Caco-2 (cell line): ENCODE measurements at regions of chr6 and their contacts with region 1.

Region 1: DNA sequence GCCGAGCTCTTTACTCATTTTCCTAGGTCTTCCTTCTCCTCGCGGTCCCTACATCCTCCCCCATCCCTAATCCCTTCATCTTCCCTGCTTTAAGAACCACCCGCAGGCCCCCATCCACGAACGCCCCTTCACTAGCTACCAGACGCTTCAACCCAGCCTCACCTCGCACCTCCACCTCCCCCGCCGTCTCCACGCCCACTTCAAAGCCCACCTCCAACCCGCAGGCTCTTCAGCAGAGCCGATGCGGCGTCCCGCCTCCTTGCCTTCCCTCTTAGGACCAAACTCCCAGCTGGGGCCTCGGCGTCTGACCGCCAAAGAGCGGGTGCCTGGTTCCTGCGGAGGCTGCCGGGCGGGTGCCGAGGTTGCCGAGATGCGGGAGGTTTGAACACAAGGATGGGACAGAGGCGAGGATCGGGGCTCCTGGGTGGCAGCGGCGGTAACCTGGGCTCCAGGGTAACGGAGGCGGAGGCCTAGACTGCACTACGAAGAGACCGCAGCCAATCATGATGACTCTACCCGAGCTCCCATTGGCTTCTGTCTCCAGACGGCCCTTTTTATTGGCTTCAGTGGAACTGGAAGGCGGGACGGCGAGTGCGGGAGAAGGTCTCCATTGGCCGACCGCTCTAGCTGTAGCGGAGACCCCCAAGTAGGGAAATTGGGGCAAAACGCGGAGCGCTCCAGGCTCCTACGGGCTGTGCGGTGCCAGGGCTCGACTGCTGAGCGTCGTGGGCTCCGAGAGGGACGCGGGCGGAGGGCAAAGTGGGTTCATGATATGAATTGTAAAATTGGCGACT is at the start of gene LCA5:
- DNase-seq: peak; percentile 94 to 97
- H3K4me3 ChIP-seq: peak within 1 kb of the TSS; percentile 75
- H3K4me3 Mint-ChIP-seq: no peak within 1 kb of the TSS
- H3K27ac Mint-ChIP-seq: no peak within 1 kb of the TSS
- H3K4me1 ChIP-seq: peaks cover 36% of the 10 kb centered on the region
- H3K4me1 Mint-ChIP-seq: peaks cover 17% of the 10 kb centered on the region
- H3K27me3 ChIP-seq: no peaks in the 10 kb centered on the region
- H3K27me3 Mint-ChIP-seq: no peaks in the 10 kb centered on the region
- CTCF ChIP-seq: no peak
- total RNA-seq, gene LCA5: 10.9 and 12.2 TPM in 2 replicates

Region 2: DNA sequence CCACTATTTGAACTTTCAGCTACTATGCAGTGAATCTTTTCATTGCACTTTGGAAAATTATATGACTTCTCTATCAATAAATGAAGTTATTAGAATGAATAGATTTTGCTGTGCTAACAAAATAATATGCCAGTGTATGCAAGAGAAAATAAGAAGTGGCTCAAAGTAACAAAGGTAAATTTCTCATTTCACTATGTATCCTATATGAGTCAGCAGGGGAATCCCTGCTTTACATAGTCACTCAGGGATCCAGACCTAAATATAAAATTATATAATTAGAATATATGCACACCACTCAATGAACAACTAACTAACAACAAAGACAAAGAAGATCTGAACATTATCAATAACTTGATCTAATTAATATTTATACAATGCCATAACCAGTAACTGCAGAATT is 1060.6 kb before region 1 on chr6:
- CTCF ChIA-PET with region 1: no interaction called
- POLR2A ChIA-PET with region 1: no interaction called
- intact Hi-C with region 1: no loop called
- DNase-seq: no peak
- H3K4me3 ChIP-seq: no peak overlapping the region
- H3K4me3 Mint-ChIP-seq: no peak overlapping the region
- H3K27ac Mint-ChIP-seq: no peak overlapping the region
- H3K4me1 ChIP-seq: no peaks in the 10 kb centered on the region
- H3K4me1 Mint-ChIP-seq: peaks cover 6% of the 10 kb centered on the region
- H3K27me3 ChIP-seq: no peaks in the 10 kb centered on the region
- H3K27me3 Mint-ChIP-seq: no peaks in the 10 kb centered on the region
- CTCF ChIP-seq: no peak

Region 3: DNA sequence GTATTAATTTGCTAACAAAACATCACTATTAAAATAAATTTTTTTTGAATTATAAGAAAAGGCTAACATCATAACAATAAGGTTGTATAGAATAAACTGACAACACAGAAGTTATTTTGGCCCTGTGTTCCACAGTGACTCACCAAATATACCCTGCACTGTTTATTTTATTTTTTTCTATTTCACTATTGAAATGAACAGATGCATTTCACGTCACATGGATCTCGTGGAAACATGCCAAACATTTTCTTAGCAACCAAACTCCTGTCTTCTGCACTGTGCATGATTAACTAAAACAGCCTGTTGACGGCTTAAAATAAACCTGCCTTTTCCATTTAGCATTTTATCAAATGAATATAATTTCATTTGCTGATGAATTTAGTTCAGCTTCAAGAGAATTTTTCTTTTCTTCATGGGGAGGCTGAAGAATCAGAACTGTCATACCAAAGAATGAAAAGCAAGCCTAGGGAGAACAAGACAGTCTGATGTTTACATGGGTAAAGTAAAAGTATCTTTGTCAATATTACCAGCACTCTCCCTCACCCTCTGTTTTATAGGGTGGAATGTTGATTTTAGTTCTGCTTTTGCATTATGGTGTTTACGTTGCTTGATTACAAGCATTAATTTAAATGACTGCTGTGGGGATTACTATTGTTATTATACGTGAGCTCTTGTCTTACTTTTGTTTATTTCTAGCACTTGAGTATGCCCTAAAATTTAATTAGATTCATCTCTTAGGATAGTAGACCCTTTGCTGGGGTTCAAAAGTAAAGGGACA is 115.3 kb before region 1 on chr6:
- CTCF ChIA-PET with region 1: no interaction called
- POLR2A ChIA-PET with region 1: no interaction called
- intact Hi-C with region 1: no loop called
- DNase-seq: no peak
- H3K4me3 ChIP-seq: no peak overlapping the region
- H3K4me3 Mint-ChIP-seq: no peak overlapping the region
- H3K27ac Mint-ChIP-seq: no peak overlapping the region
- H3K4me1 ChIP-seq: no peaks in the 10 kb centered on the region
- H3K4me1 Mint-ChIP-seq: no peaks in the 10 kb centered on the region
- H3K27me3 ChIP-seq: no peaks in the 10 kb centered on the region
- H3K27me3 Mint-ChIP-seq: no peaks in the 10 kb centered on the region
- CTCF ChIP-seq: no peak

Region 4: DNA sequence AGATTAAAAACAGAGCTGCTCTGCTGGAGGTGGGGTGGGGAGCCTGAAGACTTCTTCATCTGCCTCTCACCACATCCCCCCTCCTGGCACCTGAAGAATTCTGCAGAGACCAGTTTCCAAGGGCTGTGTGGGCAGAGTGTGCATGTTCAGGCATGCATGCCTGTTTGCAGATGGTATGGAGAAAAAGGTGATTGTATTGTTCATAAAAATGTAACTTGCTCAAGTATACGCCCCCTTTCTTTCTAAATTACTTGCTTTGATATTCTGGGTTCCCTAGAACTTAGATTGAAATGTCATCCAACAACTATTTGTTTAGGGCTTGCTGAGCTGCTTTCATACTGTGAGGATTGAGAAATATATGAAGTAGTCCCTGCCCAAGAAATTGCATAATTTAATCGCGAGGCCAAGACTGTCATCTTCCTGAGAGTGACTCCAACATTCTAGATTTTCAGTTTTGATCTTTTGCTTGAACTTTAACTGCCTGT is 83.6 kb before region 1 on chr6:
- CTCF ChIA-PET with region 1: no interaction called
- POLR2A ChIA-PET with region 1: no interaction called
- intact Hi-C with region 1: no loop called
- DNase-seq: peak; percentile 36 to 49
- H3K4me3 ChIP-seq: no peak overlapping the region
- H3K4me3 Mint-ChIP-seq: no peak overlapping the region
- H3K27ac Mint-ChIP-seq: peak overlapping the region; percentile 10
- H3K4me1 ChIP-seq: peaks cover 23% of the 10 kb centered on the region
- H3K4me1 Mint-ChIP-seq: peaks cover 18% of the 10 kb centered on the region
- H3K27me3 ChIP-seq: no peaks in the 10 kb centered on the region
- H3K27me3 Mint-ChIP-seq: no peaks in the 10 kb centered on the region
- CTCF ChIP-seq: no peak

Region 5: DNA sequence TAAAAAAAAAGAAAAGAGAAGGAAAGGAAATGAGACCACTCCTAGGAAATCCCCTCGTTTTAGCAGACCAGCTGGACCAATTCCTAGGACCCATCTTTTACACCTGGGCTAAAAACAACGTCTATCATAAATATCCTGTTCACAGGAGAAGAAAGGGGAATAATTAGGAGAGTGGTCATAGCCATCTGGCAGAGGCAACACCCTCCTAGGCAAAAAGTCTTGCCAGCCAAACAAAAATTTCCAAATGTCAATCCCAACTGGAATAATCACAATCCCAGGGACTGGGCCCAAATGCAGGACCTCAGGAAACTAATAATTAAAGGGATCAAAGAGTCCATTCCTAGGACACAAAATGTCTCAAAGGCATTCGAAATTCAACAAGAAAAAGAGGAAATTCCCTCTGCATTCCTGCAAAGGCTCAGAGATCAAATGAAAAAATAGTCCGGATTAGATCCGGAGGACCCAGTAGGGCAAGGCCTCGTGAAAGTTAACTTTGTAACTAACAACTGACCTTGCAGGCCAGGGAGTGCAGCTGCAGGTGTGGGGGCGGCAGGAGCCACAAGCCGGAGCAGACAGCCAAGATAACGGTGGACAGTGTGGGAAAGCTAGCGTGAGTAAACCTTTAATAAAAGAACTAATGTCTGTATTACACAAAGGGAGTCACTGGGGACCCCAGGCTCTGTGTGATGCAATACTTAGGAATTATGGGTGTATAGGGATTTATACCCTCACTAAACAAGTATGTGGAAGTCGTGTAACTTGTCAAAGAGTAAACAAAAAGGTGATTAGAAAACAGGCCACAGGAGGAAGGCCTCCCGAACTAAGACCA is 11.7 kb before region 1 on chr6:
- CTCF ChIA-PET with region 1: interaction called, 4 read pairs
- POLR2A ChIA-PET with region 1: interaction called, 4 read pairs
- intact Hi-C with region 1: loop called (anchors 1 kb)
- DNase-seq: peak; percentile 87 to 93
- H3K4me3 ChIP-seq: peak overlapping the region; percentile 17
- H3K4me3 Mint-ChIP-seq: peak overlapping the region; percentile 68
- H3K27ac Mint-ChIP-seq: peak overlapping the region; percentile 84
- H3K4me1 ChIP-seq: peaks cover 52% of the 10 kb centered on the region
- H3K4me1 Mint-ChIP-seq: peaks cover 32% of the 10 kb centered on the region
- H3K27me3 ChIP-seq: no peaks in the 10 kb centered on the region
- H3K27me3 Mint-ChIP-seq: no peaks in the 10 kb centered on the region
- CTCF ChIP-seq: no peak

Region 6: GRCh38 chr6:79586548-79586947 is 49.4 kb after region 1 on chr6:
- CTCF ChIA-PET with region 1: no interaction called
- POLR2A ChIA-PET with region 1: no interaction called
- intact Hi-C with region 1: no loop called
- DNase-seq: peak in 1 of 2 experiments; percentile 53
- H3K4me3 ChIP-seq: no peak overlapping the region
- H3K4me3 Mint-ChIP-seq: no peak overlapping the region
- H3K27ac Mint-ChIP-seq: no peak overlapping the region
- H3K4me1 ChIP-seq: no peaks in the 10 kb centered on the region
- H3K4me1 Mint-ChIP-seq: no peaks in the 10 kb centered on the region
- H3K27me3 ChIP-seq: no peaks in the 10 kb centered on the region
- H3K27me3 Mint-ChIP-seq: no peaks in the 10 kb centered on the region
- CTCF ChIP-seq: peak; percentile 48 to 56

Region 7: DNA sequence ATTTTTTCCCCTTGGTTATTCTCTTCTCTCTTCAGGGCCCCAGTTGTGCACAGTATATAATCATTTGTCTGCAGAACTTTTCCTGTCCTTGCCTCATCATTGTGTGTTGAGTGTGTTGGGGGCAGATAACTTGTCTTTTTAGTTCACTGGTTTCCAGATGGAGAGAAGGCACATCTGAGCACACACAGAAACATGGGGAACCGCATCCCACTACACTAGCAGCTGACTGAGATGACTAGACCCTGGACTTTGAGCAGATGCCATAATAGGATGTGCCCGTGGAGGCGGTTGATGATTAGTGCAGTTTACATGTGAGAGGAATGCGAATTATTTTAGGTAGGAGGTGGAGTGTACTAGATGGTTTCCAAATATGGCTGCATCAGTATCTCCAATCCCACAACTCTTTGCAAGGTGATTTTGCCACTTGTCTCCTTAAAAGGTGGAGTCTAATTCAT is 67.5 kb after region 1 on chr6:
- CTCF ChIA-PET with region 1: no interaction called
- POLR2A ChIA-PET with region 1: interaction called, 5 read pairs
- intact Hi-C with region 1: loop called (anchors 2 kb)
- DNase-seq: peak; percentile 82 to 90
- H3K4me3 ChIP-seq: no peak overlapping the region
- H3K4me3 Mint-ChIP-seq: peak overlapping the region; percentile 18
- H3K27ac Mint-ChIP-seq: peak overlapping the region; percentile 80
- H3K4me1 ChIP-seq: peaks cover 96% of the 10 kb centered on the region
- H3K4me1 Mint-ChIP-seq: peaks cover 62% of the 10 kb centered on the region
- H3K27me3 ChIP-seq: no peaks in the 10 kb centered on the region
- H3K27me3 Mint-ChIP-seq: no peaks in the 10 kb centered on the region
- CTCF ChIP-seq: no peak

Region 8: GRCh38 chr6:79630883-79631692 is 93.9 kb after region 1 on chr6 and contains the start of gene SH3BGRL2:
- CTCF ChIA-PET with region 1: no interaction called
- POLR2A ChIA-PET with region 1: interaction called, 12 read pairs
- intact Hi-C with region 1: no loop called
- DNase-seq: peak; percentile 88 to 89
- H3K4me3 ChIP-seq: peak within 1 kb of the TSS; percentile 90
- H3K4me3 Mint-ChIP-seq: peak within 1 kb of the TSS; percentile 95
- H3K27ac Mint-ChIP-seq: peak within 1 kb of the TSS; percentile 94
- H3K4me1 ChIP-seq: peaks cover 32% of the 10 kb centered on the region
- H3K4me1 Mint-ChIP-seq: peaks cover 27% of the 10 kb centered on the region
- H3K27me3 ChIP-seq: no peaks in the 10 kb centered on the region
- H3K27me3 Mint-ChIP-seq: no peaks in the 10 kb centered on the region
- CTCF ChIP-seq: no peak
- total RNA-seq, gene SH3BGRL2: 102 and 106 TPM in 2 replicates